HepG2 (cell line): ENCODE measurements at regions of chr1 and their contacts with region 1.

Region 1: GRCh38 chr1:21511579-21512522 is 2.6 kb downstream of the ALPL start:
- DNase-seq: no peak
- ATAC-seq: no peak
- H3K4me3 ChIP-seq: no peak overlapping the region
- H3K27ac ChIP-seq: no peak overlapping the region
- H3K4me1 ChIP-seq: peaks cover 23% of the 10 kb centered on the region
- H3K27me3 ChIP-seq: peaks cover 5 to 58% of the 10 kb centered on the region in 2 experiments; a peak in 4 of 5 replicates
- CTCF ChIP-seq: no peak
- EP300 ChIP-seq: no peak
- POLR2A ChIP-seq: no peak
- RAD21 ChIP-seq: no peak

Region 2: GRCh38 chr1:21567241-21568005 is 55.6 kb after region 1 on chr1:
- CTCF ChIA-PET with region 1: no interaction called
- POLR2A ChIA-PET with region 1: no interaction called
- in situ Hi-C with region 1: loop called (anchors 5 kb)
- intact Hi-C with region 1: no loop called
- DNase-seq: no peak
- ATAC-seq: peak; percentile 32
- H3K4me3 ChIP-seq: no peak overlapping the region
- H3K27ac ChIP-seq: no peak overlapping the region
- H3K4me1 ChIP-seq: peaks cover 25% of the 10 kb centered on the region
- H3K27me3 ChIP-seq: peaks cover 8 to 69% of the 10 kb centered on the region in 2 experiments
- CTCF ChIP-seq: no peak
- EP300 ChIP-seq: no peak
- POLR2A ChIP-seq: no peak
- RAD21 ChIP-seq: no peak